ENCODE measurements at regions of chr5 and their contacts with region 1.

Region 1: GRCh38 chr5:129460936-129461711 is 1.0 kb downstream of the ADAMTS19 start:
- DNase-seq: no peak
- ATAC-seq: peak; percentile 52
- H3K4me3 ChIP-seq: peak overlapping the region; percentile 40; the same call in 1 of the 2 replicates
- H3K27ac ChIP-seq: no peak overlapping the region
- H3K4me1 ChIP-seq: no peaks in the 10 kb centered on the region
- H3K27me3 ChIP-seq: peaks cover 23% of the 10 kb centered on the region
- CTCF ChIP-seq: no peak
- POLR2A ChIP-seq: no peak
- RAD21 ChIP-seq: no peak

Region 2: DNA sequence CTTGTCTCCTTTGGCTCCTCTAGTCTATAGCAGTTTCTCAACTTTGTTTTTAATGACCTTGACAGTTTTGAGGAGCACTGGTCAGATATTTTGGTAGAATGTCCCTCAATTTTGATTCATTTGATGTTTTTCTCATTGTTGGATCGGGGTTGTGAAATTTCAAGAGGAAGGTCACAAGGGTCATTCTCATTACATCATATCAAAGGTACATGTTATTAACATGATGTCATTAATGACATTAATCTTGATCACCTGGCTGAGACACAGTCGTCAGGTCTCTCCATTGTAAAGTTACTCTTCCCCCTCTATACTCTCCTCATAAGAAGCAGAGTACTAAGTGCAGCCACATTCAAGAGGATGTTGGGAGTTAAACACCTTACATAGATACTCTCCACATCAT is 359.3 kb before region 1 on chr5:
- CTCF ChIA-PET with region 1: no interaction called
- POLR2A ChIA-PET with region 1: no interaction called
- dilution Hi-C with region 1: no loop called
- in situ Hi-C with region 1: no loop called
- intact Hi-C with region 1: loop called (anchors 10 kb)
- DNase-seq: no peak
- ATAC-seq: no peak
- H3K4me3 ChIP-seq: no peak overlapping the region
- H3K27ac ChIP-seq: no peak overlapping the region
- H3K4me1 ChIP-seq: peaks cover 4% of the 10 kb centered on the region; the same call in 1 of the 2 replicates
- H3K27me3 ChIP-seq: no peaks in the 10 kb centered on the region
- CTCF ChIP-seq: no peak
- POLR2A ChIP-seq: no peak
- RAD21 ChIP-seq: no peak

Region 3: GRCh38 chr5:129361440-129362025 is 99.6 kb before region 1 on chr5:
- CTCF ChIA-PET with region 1: no interaction called
- POLR2A ChIA-PET with region 1: no interaction called
- dilution Hi-C with region 1: no loop called
- in situ Hi-C with region 1: no loop called
- intact Hi-C with region 1: loop called (anchors 2 kb)
- DNase-seq: peak; percentile 3
- ATAC-seq: no peak; the same call in 1 of the 2 replicates
- H3K4me3 ChIP-seq: no peak overlapping the region
- H3K27ac ChIP-seq: no peak overlapping the region
- H3K4me1 ChIP-seq: no peaks in the 10 kb centered on the region
- H3K27me3 ChIP-seq: no peaks in the 10 kb centered on the region
- CTCF ChIP-seq: peak; percentile 47
- POLR2A ChIP-seq: no peak
- RAD21 ChIP-seq: 0 out of 2 replicates have a peak, but pooled peaks have one; percentile 28

Region 4: GRCh38 chr5:129400322-129400983 is 60.7 kb before region 1 on chr5:
- CTCF ChIA-PET with region 1: no interaction called
- POLR2A ChIA-PET with region 1: no interaction called
- dilution Hi-C with region 1: no loop called
- in situ Hi-C with region 1: no loop called
- intact Hi-C with region 1: loop called (anchors 2 kb)
- DNase-seq: no peak
- ATAC-seq: peak; percentile 48
- H3K4me3 ChIP-seq: no peak overlapping the region
- H3K27ac ChIP-seq: no peak overlapping the region
- H3K4me1 ChIP-seq: no peaks in the 10 kb centered on the region
- H3K27me3 ChIP-seq: no peaks in the 10 kb centered on the region
- CTCF ChIP-seq: peak; percentile 24; the same call in 1 of the 2 replicates
- POLR2A ChIP-seq: no peak
- RAD21 ChIP-seq: no peak

Region 5: DNA sequence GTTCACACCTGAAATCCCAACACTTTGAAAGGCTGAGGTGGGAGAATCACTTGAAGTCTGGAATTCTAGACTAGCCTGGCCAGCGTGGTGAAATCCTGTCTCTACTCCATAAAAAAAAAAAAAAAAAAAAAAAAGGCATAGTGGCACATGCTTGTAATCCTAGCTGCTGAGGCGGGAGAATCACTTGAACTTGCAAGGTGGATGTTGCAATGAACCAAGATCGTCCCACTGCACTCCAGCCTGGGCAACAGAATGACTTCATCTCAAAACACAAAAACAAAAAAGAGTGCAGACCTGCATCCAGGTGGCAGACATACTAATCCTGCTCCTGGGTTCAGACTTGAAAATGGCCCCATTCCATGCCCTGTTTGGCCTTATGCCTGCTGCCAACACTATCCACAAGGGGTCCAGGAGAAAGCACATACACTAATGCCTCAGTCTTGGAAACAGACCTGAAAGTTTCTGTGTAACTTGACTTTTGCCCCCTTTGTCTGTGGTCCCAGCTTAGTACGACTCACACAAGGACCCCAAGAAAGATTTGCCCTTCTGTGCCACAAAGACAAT is 22.7 kb before region 1 on chr5:
- CTCF ChIA-PET with region 1: no interaction called
- POLR2A ChIA-PET with region 1: no interaction called
- dilution Hi-C with region 1: no loop called
- in situ Hi-C with region 1: no loop called
- intact Hi-C with region 1: no loop called
- DNase-seq: no peak
- ATAC-seq: no peak
- H3K4me3 ChIP-seq: no peak overlapping the region
- H3K27ac ChIP-seq: no peak overlapping the region
- H3K4me1 ChIP-seq: no peaks in the 10 kb centered on the region
- H3K27me3 ChIP-seq: no peaks in the 10 kb centered on the region
- CTCF ChIP-seq: no peak
- POLR2A ChIP-seq: no peak
- RAD21 ChIP-seq: no peak